Lower leg skin (tissue), 4 donors: ENCODE measurements at regions of chr14 and their contacts with region 1.

Region 1: DNA sequence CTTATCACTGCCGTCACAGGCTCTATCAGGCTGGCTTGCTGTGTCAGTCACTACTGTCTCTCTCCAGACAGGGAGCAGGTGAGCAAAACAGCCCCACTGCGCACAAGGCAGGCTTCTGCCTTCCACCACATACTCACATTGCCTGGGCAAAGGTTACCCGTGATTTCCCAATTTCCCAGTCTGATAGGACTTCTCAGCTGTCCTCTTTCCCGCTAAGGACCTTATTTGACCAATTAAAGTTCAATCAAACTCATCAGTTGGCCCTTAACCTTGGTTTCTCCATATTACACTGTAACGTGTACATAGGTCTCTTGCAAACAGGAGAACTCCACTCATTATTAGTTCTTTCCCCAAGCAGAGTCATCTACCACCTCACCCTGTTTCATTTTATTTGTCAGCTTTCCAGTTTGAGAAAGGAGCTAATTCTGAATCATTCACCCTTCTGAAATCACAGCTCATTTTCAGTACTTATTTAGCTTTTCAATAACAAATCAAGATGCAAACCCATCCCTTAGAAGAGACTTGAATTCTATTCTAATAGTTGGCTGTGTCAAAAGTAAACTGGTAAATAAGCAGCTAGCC is 170.8 kb downstream of the ESR2 start:
- DNase-seq: no peak
- H3K4me3 ChIP-seq: no peak overlapping the region
- CTCF ChIP-seq: no peak
- POLR2A ChIP-seq: no peak

Region 2: GRCh38 chr14:62916551-62916950 is 1206.8 kb before region 1 on chr14:
- intact Hi-C with region 1: loop called (anchors 5 kb)
- DNase-seq: no peak
- H3K4me3 ChIP-seq: no peak overlapping the region
- CTCF ChIP-seq: no peak
- POLR2A ChIP-seq: no peak

Region 3: GRCh38 chr14:64026600-64026999 is 96.7 kb before region 1 on chr14:
- intact Hi-C with region 1: no loop called
- DNase-seq: no peak
- H3K4me3 ChIP-seq: no peak overlapping the region
- CTCF ChIP-seq: no peak
- POLR2A ChIP-seq: no peak